Activated T-helper 1 cell treated with anti-CD3 and anti-CD28 coated beads, Interleukin-12 subunit alpha, Interleukin-12 subunit beta, Interleukin-2, Interleukin-4 antibody, amounts not matched to agents 30 ng/mL and 10 ng/mL and 1 ng/mL, durations not matched to agents 14 hours and 24 hours and 36 hours (primary cell): ENCODE measurements at regions of chr2 and their contacts with region 1.

Region 1: GRCh38 chr2:74147727-74148456 is at the start of gene BOLA3:
- DNase-seq: peak; percentile 82
- H3K4me3 Mint-ChIP-seq: no peak within 1 kb of the TSS
- H3K27ac Mint-ChIP-seq: no peak within 1 kb of the TSS
- H3K4me1 Mint-ChIP-seq: peaks cover under 1% of the 10 kb centered on the region
- H3K27me3 Mint-ChIP-seq: no peaks in the 10 kb centered on the region
- total RNA-seq, gene BOLA3: 94.2 and 98.2 TPM in 2 replicates

Region 2: DNA sequence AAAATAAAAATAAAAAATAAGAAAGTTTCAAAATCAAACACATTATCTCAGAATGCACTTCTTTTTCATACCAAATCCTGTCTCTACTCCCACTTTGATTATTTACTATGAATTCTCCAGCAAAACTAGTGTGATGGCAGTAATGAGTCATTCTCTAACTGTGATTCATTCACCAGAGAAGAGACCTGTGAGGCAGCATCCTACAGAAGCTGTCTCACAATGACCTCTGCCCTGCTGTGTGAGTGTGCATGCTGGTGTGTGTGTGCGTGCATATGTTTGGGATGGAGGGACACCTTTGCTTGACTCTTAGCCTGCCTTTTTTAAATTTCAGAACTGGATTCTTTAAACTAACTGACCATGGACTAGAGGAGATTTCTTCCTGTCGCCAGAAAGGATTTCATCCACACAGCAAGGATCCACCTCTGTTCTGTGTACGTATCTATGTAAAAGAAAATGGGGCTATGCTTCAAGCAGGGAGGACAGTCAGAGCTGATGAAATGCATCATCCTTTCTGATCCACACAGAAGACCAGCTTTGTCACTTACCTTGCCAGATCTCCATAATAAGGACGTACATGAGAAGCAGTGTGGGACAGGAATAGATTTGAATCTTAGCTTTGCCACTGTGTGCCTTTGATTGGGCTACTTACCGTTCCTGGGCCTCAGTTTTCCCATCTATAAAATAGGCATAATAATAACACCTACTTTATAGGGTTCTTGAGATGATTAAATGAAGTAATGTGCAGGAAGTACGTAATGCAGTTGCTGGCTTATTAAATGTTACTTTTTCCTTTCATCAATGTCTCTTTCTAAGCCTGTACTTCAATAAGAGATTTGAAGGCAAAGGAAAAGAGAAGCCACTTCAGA is 287.9 kb before region 1 on chr2:
- intact Hi-C with region 1: loop called (anchors 1 kb)
- DNase-seq: no peak
- H3K4me3 Mint-ChIP-seq: no peak overlapping the region
- H3K27ac Mint-ChIP-seq: peak overlapping the region; percentile 56
- H3K4me1 Mint-ChIP-seq: peaks cover 48% of the 10 kb centered on the region
- H3K27me3 Mint-ChIP-seq: no peaks in the 10 kb centered on the region

Region 3: GRCh38 chr2:73926493-73927338 is 221.2 kb before region 1 on chr2 and contains the start of gene DGUOK:
- intact Hi-C with region 1: loop called (anchors 1 kb)
- DNase-seq: peak; percentile 97
- H3K4me3 Mint-ChIP-seq: peak within 1 kb of the TSS; percentile 91
- H3K27ac Mint-ChIP-seq: peak within 1 kb of the TSS; percentile 88
- H3K4me1 Mint-ChIP-seq: peaks cover 56% of the 10 kb centered on the region
- H3K27me3 Mint-ChIP-seq: no peaks in the 10 kb centered on the region
- total RNA-seq, gene DGUOK: 92.8 and 98.0 TPM in 2 replicates

Region 4: DNA sequence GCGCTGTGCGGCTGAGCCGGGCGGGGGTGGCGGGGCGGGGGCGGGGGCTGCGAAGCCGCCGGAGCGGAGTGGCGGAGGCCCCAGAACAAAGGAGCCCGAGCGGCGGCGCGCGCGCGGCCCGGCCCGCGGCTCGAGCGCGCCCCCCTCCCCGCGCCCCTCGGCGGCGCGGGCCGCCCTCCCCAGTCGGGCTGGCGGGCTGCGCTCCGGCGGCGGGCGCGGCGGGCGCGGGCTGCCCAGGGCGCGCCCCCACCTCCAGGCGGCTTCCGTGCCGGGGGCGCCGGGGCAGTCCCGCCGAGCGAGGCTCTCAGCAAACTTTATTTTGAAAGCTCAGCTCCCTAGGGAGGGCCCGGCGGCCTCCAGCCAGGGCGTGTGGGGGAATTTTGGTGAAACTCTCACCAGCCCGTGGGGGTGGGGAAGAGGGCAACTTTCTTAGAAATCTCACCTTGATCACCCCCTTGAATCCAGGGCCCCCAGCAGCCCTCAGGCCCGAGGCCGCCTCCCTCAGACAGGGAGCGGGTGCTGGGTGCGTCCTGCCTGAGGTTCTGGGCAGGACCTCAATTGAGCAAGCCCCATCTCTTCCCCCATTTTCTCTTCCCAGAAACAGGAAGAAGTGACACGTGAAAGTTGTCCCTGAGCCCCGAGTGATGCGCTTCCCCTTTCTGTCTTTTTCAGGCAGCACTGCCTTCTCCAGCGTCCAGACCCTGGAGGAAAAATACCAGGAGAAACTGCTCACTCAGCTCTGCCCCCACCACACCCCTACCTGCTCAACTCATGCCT is 162.4 kb before region 1 on chr2:
- intact Hi-C with region 1: loop called (anchors 2 kb)
- DNase-seq: no peak
- H3K4me3 Mint-ChIP-seq: peak overlapping the region; percentile 81
- H3K27ac Mint-ChIP-seq: peak overlapping the region; percentile 91
- H3K4me1 Mint-ChIP-seq: peaks cover 81% of the 10 kb centered on the region
- H3K27me3 Mint-ChIP-seq: peaks cover 29% of the 10 kb centered on the region

Region 5: GRCh38 chr2:74119912-74120825 is 27.7 kb before region 1 on chr2:
- intact Hi-C with region 1: loop called (anchors 1 kb)
- DNase-seq: peak; percentile 82
- H3K4me3 Mint-ChIP-seq: peak overlapping the region; percentile 82
- H3K27ac Mint-ChIP-seq: peak overlapping the region; percentile 88
- H3K4me1 Mint-ChIP-seq: peaks cover 7% of the 10 kb centered on the region
- H3K27me3 Mint-ChIP-seq: peaks cover 12% of the 10 kb centered on the region

Region 6: DNA sequence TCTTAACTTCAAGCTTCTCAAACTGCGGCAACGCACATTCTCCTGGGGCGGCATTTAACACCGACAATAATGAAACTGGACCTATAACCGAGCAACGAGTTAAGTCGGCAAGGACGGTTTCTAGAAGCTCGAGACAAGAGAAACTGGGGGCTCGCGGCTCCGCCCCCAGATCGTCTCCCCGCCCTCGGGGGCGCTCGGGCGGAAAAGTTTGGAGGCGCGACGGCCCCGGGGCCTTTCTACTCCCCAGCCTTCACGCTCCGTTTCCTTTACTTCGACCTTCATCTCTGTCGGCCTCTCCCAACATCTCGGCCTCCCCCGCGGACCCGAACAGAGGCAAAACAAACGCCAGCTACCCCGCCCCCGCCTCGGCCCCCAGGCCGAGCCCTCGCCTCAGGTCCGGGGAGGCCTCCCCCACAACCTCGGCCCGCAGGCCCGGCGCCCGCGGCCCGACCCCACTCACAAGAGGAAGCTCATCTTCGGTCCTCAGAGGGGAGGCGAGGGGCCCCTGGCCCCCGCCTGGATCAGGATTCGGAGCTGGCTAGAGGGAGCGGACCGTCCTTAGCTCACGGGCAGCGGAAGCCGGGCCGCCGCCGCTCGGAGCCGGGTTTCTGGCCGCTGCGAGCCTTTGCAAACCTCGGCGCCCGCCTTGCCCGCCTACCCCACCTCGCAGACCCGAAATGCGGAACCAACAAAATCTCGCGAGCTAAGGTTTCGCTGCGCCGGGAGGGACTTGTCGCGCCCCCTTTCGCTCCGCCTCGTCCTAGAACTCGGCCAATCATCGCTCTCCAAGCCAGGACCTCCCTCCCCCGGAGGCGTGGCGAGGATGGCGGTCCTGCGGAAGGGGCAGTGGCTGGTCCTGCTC is 30.5 kb after region 1 on chr2 and contains the start of gene MOB1A:
- intact Hi-C with region 1: loop called (anchors 1 kb)
- DNase-seq: peak; percentile 99
- H3K4me3 Mint-ChIP-seq: peak within 1 kb of the TSS; percentile 88
- H3K27ac Mint-ChIP-seq: peak within 1 kb of the TSS; percentile 85
- H3K4me1 Mint-ChIP-seq: peaks cover 40% of the 10 kb centered on the region
- H3K27me3 Mint-ChIP-seq: no peaks in the 10 kb centered on the region
- total RNA-seq, gene MOB1A: 207 and 221 TPM in 2 replicates

Region 7: GRCh38 chr2:74206180-74206688 is 58.3 kb after region 1 on chr2:
- intact Hi-C with region 1: loop called (anchors 1 kb)
- DNase-seq: peak; percentile 52
- H3K4me3 Mint-ChIP-seq: peak overlapping the region; percentile 78
- H3K27ac Mint-ChIP-seq: peak overlapping the region; percentile 96
- H3K4me1 Mint-ChIP-seq: peaks cover 72% of the 10 kb centered on the region
- H3K27me3 Mint-ChIP-seq: no peaks in the 10 kb centered on the region